CD4-positive, alpha-beta T cell (primary cell): ENCODE measurements at regions of chr10 and their contacts with region 1.

Region 1: DNA sequence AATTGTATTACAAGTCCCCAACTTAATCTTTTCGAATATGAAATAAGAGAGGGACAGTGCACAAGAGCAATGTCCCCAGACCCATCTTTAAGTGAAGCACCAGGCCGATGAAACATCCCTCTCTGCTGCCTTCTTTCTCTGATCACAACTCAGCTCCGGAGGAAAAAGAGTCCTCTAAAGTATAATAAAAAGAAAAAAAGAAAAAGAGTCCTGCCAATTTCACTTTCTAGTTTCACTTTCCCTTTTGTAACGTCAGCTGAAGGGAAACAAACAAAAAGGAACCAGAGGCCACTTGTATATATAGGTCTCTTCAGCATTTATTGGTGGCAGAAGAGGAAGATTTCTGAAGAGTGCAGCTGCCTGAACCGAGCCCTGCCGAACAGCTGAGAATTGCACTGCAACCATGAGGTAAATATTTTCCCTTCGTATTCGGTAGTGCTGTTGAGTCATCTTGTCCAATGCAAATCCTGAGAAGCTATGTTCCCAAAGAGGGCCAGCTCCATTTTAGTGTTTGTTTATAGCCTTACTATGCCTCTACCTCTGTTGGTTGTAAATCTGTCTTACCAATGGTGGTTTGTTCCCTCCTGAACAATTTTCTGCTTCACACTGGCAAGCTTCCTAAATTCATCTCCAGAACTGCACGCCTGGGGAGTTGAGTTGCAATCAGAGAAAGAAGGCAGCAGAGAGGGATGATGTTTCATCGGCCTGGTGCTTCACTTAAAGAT is at the start of gene IFIT2:
- DNase-seq: peak in 10 of 14 experiments; percentile 11 to 84 (median 35)
- ATAC-seq: peak; percentile 78
- H3K4me3 ChIP-seq: peak within 1 kb of the TSS; percentile 68
- H3K4me3 Mint-ChIP-seq: peak within 1 kb of the TSS; percentile 93
- H3K27ac ChIP-seq: peak within 1 kb of the TSS; percentile 78 to 89
- H3K27ac Mint-ChIP-seq: peak within 1 kb of the TSS; percentile 99
- H3K4me1 ChIP-seq: peaks cover 15% of the 10 kb centered on the region
- H3K4me1 Mint-ChIP-seq: peaks cover 58% of the 10 kb centered on the region
- H3K27me3 ChIP-seq: no peaks in the 10 kb centered on the region
- H3K27me3 Mint-ChIP-seq: no peaks in the 10 kb centered on the region
- CTCF ChIP-seq: no peak
- total RNA-seq, gene IFIT2: 36.9 to 38.9 TPM

Region 2: DNA sequence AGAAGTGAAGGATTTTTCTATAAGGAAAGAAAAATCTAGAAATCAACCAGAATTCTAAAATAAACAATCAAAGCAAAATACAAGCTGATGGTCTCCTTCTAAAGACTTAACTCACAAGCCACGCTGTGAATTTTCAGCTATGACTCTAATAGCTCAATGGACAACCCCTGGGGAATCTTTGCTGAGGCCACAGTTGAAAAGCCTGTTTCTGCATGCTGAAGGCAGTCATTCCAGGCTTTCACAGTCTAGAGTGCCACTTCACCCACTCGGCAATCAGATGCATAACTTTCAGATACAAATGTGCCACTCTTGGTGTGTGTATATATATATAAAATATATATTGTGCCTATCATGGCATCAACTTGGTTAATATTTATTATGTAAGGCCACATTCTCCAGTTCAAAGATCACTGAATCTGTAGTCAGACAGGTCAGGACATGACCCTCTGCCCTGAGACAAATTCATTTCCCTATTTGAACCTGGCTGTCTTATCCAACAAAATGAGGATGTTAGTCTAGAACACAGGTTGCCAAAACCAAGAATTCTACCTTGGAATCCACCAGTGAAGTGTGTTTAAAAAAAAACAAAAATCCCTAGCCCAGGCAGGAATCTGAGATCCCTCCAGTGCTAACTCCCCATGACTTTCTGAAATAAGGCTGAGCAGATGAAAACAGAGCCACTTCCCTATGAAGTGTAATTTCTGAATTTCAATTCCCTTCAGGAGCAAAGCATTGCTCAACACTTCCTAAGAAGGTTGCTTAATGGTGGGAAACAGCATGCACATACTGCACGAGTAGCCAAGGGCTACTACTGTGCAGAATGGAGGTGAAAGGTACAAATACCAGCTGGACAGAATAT is 60.2 kb before region 1 on chr10:
- CTCF ChIA-PET with region 1: no interaction called
- POLR2A ChIA-PET with region 1: no interaction called
- intact Hi-C with region 1: no loop called
- DNase-seq: no peak
- ATAC-seq: no peak
- H3K4me3 ChIP-seq: no peak overlapping the region
- H3K4me3 Mint-ChIP-seq: no peak overlapping the region
- H3K27ac ChIP-seq: no peak overlapping the region
- H3K27ac Mint-ChIP-seq: no peak overlapping the region
- H3K4me1 ChIP-seq: no peaks in the 10 kb centered on the region
- H3K4me1 Mint-ChIP-seq: peaks cover 16% of the 10 kb centered on the region
- H3K27me3 ChIP-seq: no peaks in the 10 kb centered on the region
- H3K27me3 Mint-ChIP-seq: no peaks in the 10 kb centered on the region
- CTCF ChIP-seq: no peak

Region 3: DNA sequence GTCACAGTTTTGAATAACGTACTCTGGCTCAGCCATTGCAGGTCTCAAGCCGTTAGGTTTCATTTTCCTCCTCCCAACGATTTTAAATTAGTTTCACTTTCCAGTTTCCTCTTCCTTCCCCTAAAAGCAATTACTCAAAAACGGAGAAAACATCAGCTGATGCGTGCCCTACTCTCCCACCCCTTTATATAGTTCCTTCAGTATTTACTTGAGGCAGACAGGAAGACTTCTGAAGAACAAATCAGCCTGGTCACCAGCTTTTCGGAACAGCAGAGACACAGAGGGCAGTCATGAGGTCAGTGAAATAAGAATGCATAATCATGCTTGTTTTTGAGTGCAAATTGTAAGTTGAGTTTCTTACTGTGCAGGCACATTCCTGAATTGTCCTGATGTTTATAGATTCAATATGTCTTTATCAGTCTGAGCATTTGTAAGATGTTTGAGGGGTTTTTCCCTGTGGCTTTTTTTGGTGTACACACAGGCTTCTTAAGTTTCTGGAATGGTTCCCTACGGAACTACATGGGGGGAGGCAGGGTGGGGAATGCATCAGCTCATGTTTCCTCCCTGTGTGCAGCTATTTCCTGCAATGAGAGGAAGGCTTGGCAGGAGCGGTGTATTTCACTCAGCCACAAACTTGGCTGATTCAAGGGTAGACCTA is 26.0 kb after region 1 on chr10 and contains the start of gene IFIT3:
- CTCF ChIA-PET with region 1: no interaction called
- POLR2A ChIA-PET with region 1: interaction called, 25 read pairs
- intact Hi-C with region 1: loop called in 1 of 2 experiments (anchors 2 kb)
- DNase-seq: peak in 5 of 14 experiments; percentile 28 to 69 (median 62)
- ATAC-seq: peak; percentile 43
- H3K4me3 ChIP-seq: peak within 1 kb of the TSS; percentile 62
- H3K4me3 Mint-ChIP-seq: peak within 1 kb of the TSS; percentile 86
- H3K27ac ChIP-seq: peak within 1 kb of the TSS; percentile 30 to 32
- H3K27ac Mint-ChIP-seq: peak within 1 kb of the TSS; percentile 63
- H3K4me1 ChIP-seq: peaks cover 45% of the 10 kb centered on the region
- H3K4me1 Mint-ChIP-seq: peaks cover 46% of the 10 kb centered on the region
- H3K27me3 ChIP-seq: no peaks in the 10 kb centered on the region
- H3K27me3 Mint-ChIP-seq: no peaks in the 10 kb centered on the region
- CTCF ChIP-seq: no peak
- total RNA-seq, gene IFIT3: 11.5 to 12.8 TPM

Region 4: DNA sequence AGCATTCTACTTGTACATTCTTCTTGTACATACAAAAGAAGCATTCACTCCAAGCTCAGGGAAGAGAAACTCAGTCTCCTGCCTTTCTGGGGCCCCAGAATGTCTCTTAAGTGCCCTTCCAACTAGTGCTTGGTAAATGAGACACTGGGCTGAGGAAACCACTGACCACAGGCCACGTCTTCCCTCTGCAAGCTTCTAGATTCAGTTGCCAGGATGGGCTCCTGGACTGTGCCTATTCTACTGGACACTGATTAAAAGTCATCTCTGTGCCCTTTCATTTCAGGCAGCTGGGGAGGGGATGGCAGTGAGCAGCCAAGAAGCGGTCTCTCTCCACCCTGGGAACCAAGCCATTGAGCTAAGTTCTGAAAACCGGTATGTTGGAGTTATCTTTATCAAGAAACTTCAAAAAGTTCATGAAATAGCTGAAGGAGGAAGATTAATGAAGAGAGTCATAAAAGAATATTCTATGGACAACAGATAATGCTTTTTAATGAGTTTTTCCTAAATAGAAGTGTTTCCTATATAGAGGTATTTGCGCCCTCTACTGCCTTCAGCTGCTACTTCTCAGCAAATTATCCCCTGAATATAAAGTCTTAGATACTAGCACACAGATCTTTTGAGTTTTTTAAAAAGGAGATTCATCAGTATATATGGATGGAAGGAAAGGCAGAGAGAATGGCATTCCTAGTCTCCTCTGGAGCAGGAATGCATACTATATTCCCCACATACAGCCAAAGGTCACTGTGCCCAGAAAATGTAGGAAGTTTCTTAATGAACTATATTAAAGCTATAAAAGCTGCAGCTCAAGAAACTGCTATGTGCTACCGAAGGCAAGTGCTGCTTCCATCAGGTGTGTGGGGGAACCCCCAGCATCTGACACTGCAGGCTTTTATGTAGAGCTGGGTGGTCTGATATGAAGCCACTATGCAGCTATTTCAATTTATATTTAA is 67.5 kb after region 1 on chr10:
- CTCF ChIA-PET with region 1: interaction called, 6 read pairs
- POLR2A ChIA-PET with region 1: interaction called, 12 read pairs
- intact Hi-C with region 1: loop called in 1 of 2 experiments (anchors 5 kb)
- DNase-seq: peak in 5 of 14 experiments; percentile 8 to 55 (median 39)
- ATAC-seq: peak; percentile 46
- H3K4me3 ChIP-seq: no peak overlapping the region
- H3K4me3 Mint-ChIP-seq: no peak overlapping the region
- H3K27ac ChIP-seq: no peak overlapping the region
- H3K27ac Mint-ChIP-seq: no peak overlapping the region
- H3K4me1 ChIP-seq: peaks cover 7% of the 10 kb centered on the region
- H3K4me1 Mint-ChIP-seq: peaks cover 7% of the 10 kb centered on the region
- H3K27me3 ChIP-seq: no peaks in the 10 kb centered on the region
- H3K27me3 Mint-ChIP-seq: no peaks in the 10 kb centered on the region
- CTCF ChIP-seq: peak; percentile 58

Region 5: GRCh38 chr10:89419548-89419947 is 117.7 kb after region 1 on chr10:
- CTCF ChIA-PET with region 1: no interaction called
- POLR2A ChIA-PET with region 1: interaction called, 55 read pairs
- intact Hi-C with region 1: loop called (anchors 2 to 5 kb)
- DNase-seq: peak in 4 of 14 experiments; percentile 21 to 78 (median 60)
- ATAC-seq: peak; percentile 28
- H3K4me3 ChIP-seq: no peak overlapping the region
- H3K4me3 Mint-ChIP-seq: peak overlapping the region; percentile 63
- H3K27ac ChIP-seq: no peak overlapping the region
- H3K27ac Mint-ChIP-seq: peak overlapping the region; percentile 75
- H3K4me1 ChIP-seq: peaks cover 27% of the 10 kb centered on the region
- H3K4me1 Mint-ChIP-seq: peaks cover 60% of the 10 kb centered on the region
- H3K27me3 ChIP-seq: no peaks in the 10 kb centered on the region
- H3K27me3 Mint-ChIP-seq: no peaks in the 10 kb centered on the region
- CTCF ChIP-seq: peak; percentile 31

Region 6: DNA sequence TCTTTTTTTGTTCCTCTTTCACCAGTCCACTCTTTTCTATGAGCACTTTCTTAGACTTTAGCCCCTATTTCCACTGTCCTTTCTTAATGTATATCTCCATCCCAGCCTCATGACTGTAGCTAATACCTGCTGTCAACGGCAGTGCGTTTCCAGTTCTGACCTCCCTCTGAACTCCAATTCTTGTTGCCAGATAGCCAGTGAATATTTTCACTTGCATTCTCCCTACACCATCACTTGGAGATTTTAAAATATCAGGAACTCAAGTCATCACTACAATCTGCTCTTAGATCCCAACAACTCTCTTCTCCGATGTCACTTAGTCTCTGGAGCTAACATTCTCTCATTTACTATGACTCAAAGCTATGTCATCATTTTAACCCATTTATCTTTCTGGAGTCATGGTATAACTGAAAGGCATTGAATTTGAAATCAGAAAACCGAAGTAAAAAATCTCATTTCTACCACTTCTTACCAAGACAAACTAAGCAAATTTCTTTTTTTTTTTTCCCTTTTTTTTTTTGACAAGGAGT is 238.6 kb after region 1 on chr10:
- CTCF ChIA-PET with region 1: no interaction called
- POLR2A ChIA-PET with region 1: no interaction called
- intact Hi-C with region 1: no loop called
- DNase-seq: no peak
- ATAC-seq: no peak
- H3K4me3 ChIP-seq: no peak overlapping the region
- H3K4me3 Mint-ChIP-seq: no peak overlapping the region
- H3K27ac ChIP-seq: no peak overlapping the region
- H3K27ac Mint-ChIP-seq: no peak overlapping the region
- H3K4me1 ChIP-seq: peaks cover 3% of the 10 kb centered on the region
- H3K4me1 Mint-ChIP-seq: no peaks in the 10 kb centered on the region
- H3K27me3 ChIP-seq: peaks cover 0 to 8% of the 10 kb centered on the region in 2 experiments
- H3K27me3 Mint-ChIP-seq: peaks cover 60% of the 10 kb centered on the region
- CTCF ChIP-seq: no peak